ENCODE measurements at regions of chr18 and their contacts with region 1.

Region 1: DNA sequence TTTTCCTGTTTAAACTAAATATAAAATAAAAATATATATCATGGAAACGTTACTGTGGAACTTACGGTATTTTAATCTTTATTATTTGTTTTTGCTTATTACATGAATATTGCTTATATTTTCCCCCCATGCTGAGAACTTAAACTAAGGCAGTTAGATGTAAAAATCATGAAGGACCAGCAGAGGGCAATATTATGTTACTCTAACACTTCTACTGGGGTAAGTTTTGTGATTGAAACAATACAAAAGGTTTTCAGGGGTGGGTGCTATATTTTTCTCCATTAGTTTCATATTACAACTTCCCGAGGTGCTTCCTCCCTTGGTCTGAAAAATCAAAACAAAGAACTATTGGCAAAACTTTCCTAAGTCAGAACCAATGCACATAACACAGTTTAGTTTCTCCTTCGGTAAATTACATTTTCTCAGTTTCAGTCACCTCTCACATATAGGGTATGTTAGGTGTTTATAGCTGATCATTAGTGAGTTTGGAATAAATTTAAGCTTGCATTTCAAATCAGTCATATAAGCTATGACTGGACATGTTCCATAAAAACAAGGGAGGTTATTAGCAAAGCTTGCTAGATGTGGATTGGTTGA is 54.8 kb downstream of the ZNF407 start:
- DNase-seq: no peak
- ATAC-seq: no peak
- H3K4me3 Mint-ChIP-seq: no peak overlapping the region
- H3K27ac Mint-ChIP-seq: no peak overlapping the region
- H3K4me1 Mint-ChIP-seq: no peaks in the 10 kb centered on the region
- H3K27me3 Mint-ChIP-seq: no peaks in the 10 kb centered on the region

Region 2: DNA sequence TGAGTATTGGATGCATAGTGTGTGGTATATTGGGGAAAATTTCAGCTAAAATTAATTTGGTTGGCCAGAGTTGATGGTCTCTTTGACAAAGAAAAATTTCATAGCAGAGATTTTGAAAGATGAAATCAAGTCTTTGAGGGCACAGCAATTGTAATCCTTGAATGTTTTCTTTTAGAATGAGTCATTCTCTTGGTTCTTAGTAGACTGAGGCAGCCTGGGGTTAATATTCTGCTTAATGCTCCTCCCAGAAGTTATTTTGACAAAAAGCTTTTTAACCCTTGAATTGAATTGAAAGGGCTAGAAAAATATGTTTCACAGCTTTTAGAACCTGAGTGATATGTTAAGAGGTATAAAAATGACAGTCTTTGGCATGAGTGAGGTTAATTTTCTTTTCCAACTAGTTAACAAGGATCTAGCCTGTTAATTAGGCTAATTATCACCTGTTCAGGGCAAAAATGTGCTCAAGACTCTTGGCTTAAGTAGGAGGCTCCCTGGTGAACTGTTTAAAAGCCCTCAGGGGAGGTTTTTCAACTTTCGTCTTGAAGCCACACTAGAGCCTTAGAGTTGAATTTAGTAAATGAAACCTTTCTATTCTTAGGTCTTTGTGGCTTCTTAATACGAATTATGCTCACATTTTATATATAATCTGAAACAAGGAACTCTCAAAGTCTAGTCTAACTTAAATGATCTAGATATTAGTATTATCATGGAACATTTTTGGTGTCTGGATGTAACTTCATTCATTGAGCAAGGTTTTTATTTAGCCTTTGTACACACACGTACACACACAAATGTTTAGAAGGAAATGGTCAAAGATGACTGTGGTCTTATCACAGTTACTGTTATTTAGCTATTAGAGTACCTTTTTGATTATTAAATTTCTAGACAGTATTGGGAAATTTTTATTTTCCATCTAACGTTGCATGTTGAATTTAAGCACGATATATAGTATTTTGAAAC is 217.7 kb after region 1 on chr18:
- CTCF ChIA-PET with region 1: no interaction called
- POLR2A ChIA-PET with region 1: no interaction called
- intact Hi-C with region 1: loop called in 1 of 2 experiments (anchors 10 kb)
- DNase-seq: no peak
- ATAC-seq: no peak
- H3K4me3 Mint-ChIP-seq: no peak overlapping the region
- H3K27ac Mint-ChIP-seq: no peak overlapping the region
- H3K4me1 Mint-ChIP-seq: no peaks in the 10 kb centered on the region
- H3K27me3 Mint-ChIP-seq: no peaks in the 10 kb centered on the region

Region 3: GRCh38 chr18:74963820-74964446 is 311.4 kb after region 1 on chr18:
- CTCF ChIA-PET with region 1: no interaction called
- POLR2A ChIA-PET with region 1: no interaction called
- intact Hi-C with region 1: loop called in 1 of 2 experiments (anchors 10 kb)
- DNase-seq: no peak
- ATAC-seq: no peak
- H3K4me3 Mint-ChIP-seq: no peak overlapping the region
- H3K27ac Mint-ChIP-seq: no peak overlapping the region
- H3K4me1 Mint-ChIP-seq: no peaks in the 10 kb centered on the region
- H3K27me3 Mint-ChIP-seq: no peaks in the 10 kb centered on the region

Region 4: DNA sequence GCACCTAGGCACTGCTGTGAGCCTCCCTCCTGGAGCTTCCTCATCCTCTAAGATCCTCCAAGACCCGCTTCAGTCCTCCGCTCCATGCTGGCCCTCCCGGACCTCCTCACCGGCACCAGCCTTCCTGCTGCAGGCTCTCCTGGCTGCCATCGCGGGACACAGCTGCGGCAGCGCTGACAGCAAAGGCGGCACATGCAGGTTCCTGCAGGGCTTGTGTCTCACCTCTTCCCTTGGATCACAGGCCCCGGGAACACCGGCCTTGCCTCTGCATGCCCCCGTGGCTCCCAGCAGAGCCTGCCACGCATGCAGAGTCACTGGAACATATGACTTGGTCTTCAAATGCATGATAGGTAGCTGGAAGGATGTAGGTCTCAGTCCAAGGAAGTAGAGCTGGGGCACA is 489.2 kb after region 1 on chr18:
- CTCF ChIA-PET with region 1: no interaction called
- POLR2A ChIA-PET with region 1: no interaction called
- intact Hi-C with region 1: no loop called
- DNase-seq: no peak
- ATAC-seq: no peak
- H3K4me3 Mint-ChIP-seq: no peak overlapping the region
- H3K27ac Mint-ChIP-seq: no peak overlapping the region
- H3K4me1 Mint-ChIP-seq: no peaks in the 10 kb centered on the region
- H3K27me3 Mint-ChIP-seq: no peaks in the 10 kb centered on the region

Region 5: GRCh38 chr18:75478996-75479880 is 826.7 kb after region 1 on chr18:
- CTCF ChIA-PET with region 1: interaction called, 8 read pairs
- POLR2A ChIA-PET with region 1: no interaction called
- intact Hi-C with region 1: loop called (anchors 1 kb)
- DNase-seq: no peak
- ATAC-seq: peak; percentile 68
- H3K4me3 Mint-ChIP-seq: no peak overlapping the region
- H3K27ac Mint-ChIP-seq: no peak overlapping the region
- H3K4me1 Mint-ChIP-seq: no peaks in the 10 kb centered on the region
- H3K27me3 Mint-ChIP-seq: peaks cover 15% of the 10 kb centered on the region

Region 6: GRCh38 chr18:76349067-76349715 is 1696.7 kb after region 1 on chr18:
- CTCF ChIA-PET with region 1: no interaction called
- POLR2A ChIA-PET with region 1: no interaction called
- intact Hi-C with region 1: loop called in 1 of 2 experiments (anchors 5 kb)
- DNase-seq: peak; percentile 82
- ATAC-seq: peak; percentile 63
- H3K4me3 Mint-ChIP-seq: no peak overlapping the region
- H3K27ac Mint-ChIP-seq: no peak overlapping the region
- H3K4me1 Mint-ChIP-seq: peaks cover 8% of the 10 kb centered on the region
- H3K27me3 Mint-ChIP-seq: peaks cover 2% of the 10 kb centered on the region

Measured in activated CD4-positive, alpha-beta T cell treated with anti-CD3 and anti-CD28 coated beads for 36 hours (primary cell).